ENCODE measurements at regions of chr11 and their contacts with region 1.

Region 1: DNA sequence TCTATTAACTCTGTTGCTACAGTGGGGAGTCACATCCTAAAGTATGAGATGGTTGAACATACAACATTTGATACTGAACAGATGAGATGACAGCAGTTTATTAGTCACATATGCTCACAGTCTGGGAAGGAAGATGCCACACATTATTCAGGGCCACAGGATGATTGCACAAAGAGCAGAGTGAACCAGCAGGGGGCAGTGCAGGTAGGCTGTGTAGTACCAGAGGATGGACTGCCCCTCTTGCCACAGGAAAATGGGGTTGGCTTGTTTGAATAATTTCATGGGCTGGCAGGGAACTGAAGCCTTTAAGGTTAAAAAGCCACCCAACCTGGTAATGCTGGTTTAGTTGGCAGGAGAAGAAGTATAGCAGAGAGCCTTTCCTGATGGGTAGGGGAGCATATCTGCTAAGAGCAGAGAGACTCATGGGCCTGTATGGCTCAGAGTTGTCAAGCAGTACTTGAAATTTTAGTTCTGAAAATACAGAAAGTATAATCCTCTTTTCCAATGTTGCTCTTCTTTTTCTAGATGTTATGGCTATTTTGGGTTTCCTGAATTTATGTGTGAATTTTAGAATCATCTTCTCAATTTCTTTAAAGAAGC is 180.4 kb upstream of the B3GAT1 start:
- DNase-seq: peak; percentile 55
- H3K4me3 ChIP-seq: no peak overlapping the region
- H3K27ac ChIP-seq: no peak overlapping the region
- H3K4me1 ChIP-seq: no peaks in the 10 kb centered on the region
- H3K27me3 ChIP-seq: peaks cover 11% of the 10 kb centered on the region
- CTCF ChIP-seq: peak in 4 of 5 experiments; percentile 30 to 53 (median 32)
- EP300 ChIP-seq: no peak
- POLR2A ChIP-seq: no peak

Region 2: DNA sequence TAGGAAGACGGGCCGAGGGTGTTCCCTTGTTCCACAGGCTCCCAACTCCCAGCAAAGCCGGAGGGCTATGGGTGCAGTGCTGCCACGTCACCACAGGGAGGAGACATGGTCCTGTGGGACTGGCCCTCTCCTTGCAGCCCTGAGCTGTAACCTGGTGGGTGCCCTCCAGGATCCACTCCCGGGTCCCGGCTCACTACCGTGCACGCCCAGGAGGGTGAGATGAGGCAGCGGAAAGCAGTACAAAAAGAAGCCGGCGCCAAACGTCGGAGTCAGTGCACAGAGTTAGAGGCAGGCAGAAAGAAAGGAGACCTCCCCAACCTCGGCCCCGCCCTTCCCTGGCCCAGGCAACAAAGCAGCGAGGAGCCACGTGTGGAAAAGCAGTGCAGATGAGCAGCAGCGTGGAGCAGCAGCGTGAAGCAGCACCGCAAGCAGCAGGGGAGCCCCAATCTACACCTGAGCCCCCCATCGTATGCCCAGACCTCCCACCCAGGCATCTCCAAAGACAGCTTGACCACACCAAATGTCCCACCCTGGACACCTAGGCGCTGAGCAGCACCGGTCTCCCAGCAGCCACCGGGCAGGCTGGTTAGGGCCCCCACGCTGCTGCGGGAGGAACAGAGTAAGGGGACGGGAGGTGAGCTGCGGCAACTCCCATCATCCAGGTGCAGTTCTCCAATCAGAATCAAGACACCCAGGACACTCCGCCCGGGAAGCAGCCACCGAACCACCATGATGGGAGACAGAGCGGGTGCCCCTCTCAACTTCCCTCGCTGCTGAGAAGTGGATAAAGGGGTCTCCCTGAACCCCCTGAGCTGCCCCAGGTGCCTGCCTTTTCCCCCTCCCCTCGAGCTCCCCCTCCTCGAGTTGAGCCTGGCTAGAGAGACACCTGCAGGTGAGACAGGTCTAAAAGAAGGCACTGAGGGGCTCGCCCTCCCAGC is 664.5 kb before region 1 on chr11:
- in situ Hi-C with region 1: no loop called
- intact Hi-C with region 1: no loop called
- DNase-seq: peak; percentile 69
- H3K4me3 ChIP-seq: peak overlapping the region in 2 of 4 donors; percentile 3 to 36
- H3K27ac ChIP-seq: peak overlapping the region in 1 of 4 donors; percentile 26
- H3K4me1 ChIP-seq: peaks cover 8 to 13% (median 11%) of the 10 kb centered on the region in 4 donors
- H3K27me3 ChIP-seq: no peaks in the 10 kb centered on the region
- CTCF ChIP-seq: peak; percentile 83 to 86 (median 84)
- EP300 ChIP-seq: no peak
- POLR2A ChIP-seq: no peak

Region 3: DNA sequence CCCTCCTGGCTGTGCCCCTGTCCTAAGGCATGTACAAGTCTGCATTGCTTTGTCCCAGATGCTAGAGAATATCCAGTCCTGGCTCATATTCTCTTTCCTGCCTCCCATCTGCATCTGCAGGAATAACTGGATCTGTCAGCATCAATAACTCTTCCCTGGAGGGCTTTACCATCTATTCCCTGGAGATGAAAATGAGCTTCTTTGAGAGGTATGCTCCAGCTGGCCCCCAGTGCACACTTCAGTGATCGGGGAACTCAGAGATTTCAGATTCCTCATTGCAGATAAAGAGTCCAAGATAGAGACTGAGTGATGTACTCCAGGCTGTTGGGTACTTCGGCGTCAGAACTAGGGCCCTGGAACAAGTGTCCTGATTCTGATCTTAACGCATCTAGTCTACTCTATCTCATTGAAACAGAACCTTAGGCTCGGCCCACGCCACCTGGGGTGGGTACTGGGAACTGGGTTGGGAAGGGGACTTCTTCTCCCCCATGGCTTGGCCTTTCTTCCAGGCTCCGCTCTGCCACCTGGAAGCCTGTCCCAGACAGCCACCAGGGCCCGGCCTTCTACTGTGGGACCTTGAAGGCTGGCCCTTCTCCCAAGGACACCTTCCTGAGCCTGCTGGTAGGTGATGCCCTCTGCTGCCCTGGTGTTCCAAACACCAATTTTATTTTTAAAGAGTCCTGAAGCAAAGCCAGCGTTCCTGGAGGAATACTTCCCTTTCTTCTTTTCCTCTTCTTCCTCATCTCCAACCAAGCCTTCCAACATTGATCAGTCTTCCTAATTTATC is 278.5 kb before region 1 on chr11:
- in situ Hi-C with region 1: no loop called
- intact Hi-C with region 1: no loop called
- DNase-seq: no peak
- H3K4me3 ChIP-seq: no peak overlapping the region
- H3K27ac ChIP-seq: no peak overlapping the region
- H3K4me1 ChIP-seq: no peaks in the 10 kb centered on the region
- H3K27me3 ChIP-seq: peaks cover 8% of the 10 kb centered on the region
- CTCF ChIP-seq: no peak
- EP300 ChIP-seq: no peak
- POLR2A ChIP-seq: no peak

Region 4: DNA sequence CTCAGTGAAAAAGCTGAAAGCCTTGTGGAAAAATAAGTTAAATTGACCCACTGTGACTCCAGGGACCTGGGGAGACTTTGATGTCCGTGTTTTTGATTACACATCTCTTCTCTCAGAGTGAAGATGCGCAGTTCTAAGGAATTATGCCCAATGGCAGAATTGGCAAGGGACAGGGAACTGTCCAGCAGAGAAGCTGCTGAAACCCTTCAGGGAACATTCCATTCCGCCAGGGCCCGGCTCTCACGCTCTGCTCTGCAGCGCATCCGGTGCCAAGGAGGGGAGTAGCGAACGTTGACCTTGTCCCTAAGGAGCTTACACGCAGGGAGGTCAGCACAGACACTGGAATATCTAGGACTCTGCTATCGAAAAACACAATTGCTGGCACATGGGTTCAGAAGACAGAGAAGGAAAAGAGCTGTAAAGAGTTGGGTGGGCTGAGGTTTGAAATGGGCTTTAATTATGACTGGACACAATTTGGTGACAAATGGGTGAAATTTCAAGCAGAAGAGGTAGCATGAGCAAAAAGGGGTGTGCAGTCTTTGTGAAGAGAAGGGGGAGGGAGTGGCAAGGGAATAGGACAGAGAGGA is 116.0 kb before region 1 on chr11:
- in situ Hi-C with region 1: loop called in 1 of 4 experiments (anchors 25 kb)
- intact Hi-C with region 1: no loop called
- DNase-seq: no peak
- H3K4me3 ChIP-seq: no peak overlapping the region
- H3K27ac ChIP-seq: no peak overlapping the region
- H3K4me1 ChIP-seq: no peaks in the 10 kb centered on the region
- H3K27me3 ChIP-seq: no peaks in the 10 kb centered on the region
- CTCF ChIP-seq: no peak
- EP300 ChIP-seq: no peak
- POLR2A ChIP-seq: no peak

Measured in transverse colon (tissue), 4 donors.